Uterus (tissue), 4 donors: ENCODE measurements at regions of chr3 and their contacts with region 1.

Region 1: GRCh38 chr3:124559881-124560574 is 170.2 kb upstream of the UMPS start:
- DNase-seq: peak; percentile 57 to 74
- H3K4me3 ChIP-seq: no peak overlapping the region
- H3K27ac ChIP-seq: peak overlapping the region; percentile 51 to 53
- H3K4me1 ChIP-seq: no peaks in the 10 kb centered on the region
- H3K27me3 ChIP-seq: no peaks in the 10 kb centered on the region
- CTCF ChIP-seq: peak; percentile 70 to 87 (median 81)
- POLR2A ChIP-seq: no peak

Region 2: GRCh38 chr3:124492811-124493210 is 67.2 kb before region 1 on chr3:
- intact Hi-C with region 1: loop called (anchors 10 kb)
- DNase-seq: peak; percentile 27 to 39
- H3K4me3 ChIP-seq: no peak overlapping the region
- H3K27ac ChIP-seq: no peak overlapping the region
- H3K4me1 ChIP-seq: no peaks in the 10 kb centered on the region
- H3K27me3 ChIP-seq: no peaks in the 10 kb centered on the region
- CTCF ChIP-seq: peak; percentile 13 to 49 (median 35)
- POLR2A ChIP-seq: no peak

Region 3: DNA sequence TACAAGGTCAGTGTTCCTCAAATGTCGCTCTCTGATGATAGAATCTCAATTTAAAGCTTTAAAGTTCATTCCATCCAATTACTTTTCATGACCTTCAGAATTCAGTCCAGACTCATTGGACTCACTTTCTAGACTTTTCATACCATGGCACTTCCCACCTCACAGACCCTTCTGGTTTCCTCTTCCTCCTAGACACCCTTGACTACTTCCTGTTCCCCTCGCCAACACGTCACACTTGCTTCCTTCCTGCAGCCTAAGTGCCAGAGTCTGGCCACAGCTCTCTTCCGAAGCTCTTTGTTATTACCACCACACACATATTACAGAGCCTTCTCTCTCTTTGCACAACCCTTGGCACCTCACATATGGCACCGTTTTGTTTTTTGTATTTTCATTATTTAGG is 111.1 kb after region 1 on chr3:
- intact Hi-C with region 1: no loop called
- DNase-seq: no peak
- H3K4me3 ChIP-seq: no peak overlapping the region
- H3K27ac ChIP-seq: no peak overlapping the region
- H3K4me1 ChIP-seq: no peaks in the 10 kb centered on the region
- H3K27me3 ChIP-seq: no peaks in the 10 kb centered on the region
- CTCF ChIP-seq: no peak
- POLR2A ChIP-seq: no peak

Region 4: DNA sequence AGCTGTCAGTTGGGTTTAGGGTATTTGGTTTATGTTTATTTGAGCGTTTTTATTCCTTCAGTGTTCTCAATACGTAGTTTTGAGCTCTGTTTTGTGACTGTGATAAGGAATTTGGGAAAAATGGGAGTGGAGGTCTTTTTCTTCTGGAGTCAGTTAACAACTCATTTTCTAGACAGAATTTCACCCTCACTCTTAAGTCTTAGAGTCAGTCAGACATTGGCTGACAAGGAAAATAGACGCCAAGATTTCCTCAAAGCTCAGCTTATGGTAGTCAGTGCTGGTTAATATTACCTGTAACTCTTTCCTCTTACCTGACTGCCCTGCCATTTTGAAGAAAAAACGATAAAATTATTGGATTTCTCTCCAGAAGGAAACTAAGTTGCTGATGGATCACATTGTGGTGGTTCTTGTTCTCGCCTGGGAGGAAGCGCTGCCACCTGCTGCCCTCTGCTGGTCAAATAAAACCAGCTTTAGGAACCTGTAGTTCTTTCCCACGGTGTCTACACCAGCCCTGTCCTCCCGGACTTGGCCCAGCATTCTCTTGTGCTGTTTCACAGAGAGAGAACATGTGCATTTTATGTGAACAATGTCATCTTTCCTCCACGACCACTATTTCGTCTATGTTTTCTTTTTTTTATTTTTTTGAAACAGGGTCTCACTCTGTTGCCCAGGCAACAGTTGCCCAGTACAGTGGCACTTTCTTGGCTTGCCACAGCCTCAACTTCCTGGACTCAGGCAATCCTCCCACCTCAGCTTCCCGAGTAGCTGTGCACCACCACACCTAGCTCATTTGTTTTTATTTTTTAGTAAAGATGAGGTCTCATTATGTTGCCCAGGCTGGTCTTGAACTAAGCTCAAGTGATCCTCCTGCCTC is 128.8 kb after region 1 on chr3:
- intact Hi-C with region 1: loop called (anchors 2 kb)
- DNase-seq: peak; percentile 64 to 71
- H3K4me3 ChIP-seq: no peak overlapping the region
- H3K27ac ChIP-seq: no peak overlapping the region
- H3K4me1 ChIP-seq: no peaks in the 10 kb centered on the region
- H3K27me3 ChIP-seq: no peaks in the 10 kb centered on the region
- CTCF ChIP-seq: peak; percentile 65 to 83 (median 76)
- POLR2A ChIP-seq: no peak